Heart right ventricle (tissue), 16 donors: ENCODE measurements at regions of chr16 and their contacts with region 1.

Region 1: GRCh38 chr16:24036614-24037013 is 200.8 kb downstream of the PRKCB start:
- DNase-seq: peak in 1 of 2 donors; percentile 23
- ATAC-seq: peak in 5 of 8 donors; percentile 44 to 61 (median 58)
- H3K4me3 ChIP-seq: no peak overlapping the region
- H3K27ac ChIP-seq: no peak overlapping the region
- H3K4me1 ChIP-seq: peaks cover 0 to 16% (median 0%) of the 10 kb centered on the region in 9 donors
- H3K27me3 ChIP-seq: peaks cover 0 to 52% (median 17%) of the 10 kb centered on the region in 7 donors
- CTCF ChIP-seq: peak; percentile 24 to 75 (median 64)

Region 2: GRCh38 chr16:23682181-23682580 is 354.4 kb before region 1 on chr16:
- intact Hi-C with region 1: loop called in 1 of 10 experiments (anchors 5 kb)
- DNase-seq: no peak
- ATAC-seq: no peak
- H3K4me3 ChIP-seq: no peak overlapping the region
- H3K27ac ChIP-seq: no peak overlapping the region
- H3K4me1 ChIP-seq: peaks cover 3 to 33% (median 13%) of the 10 kb centered on the region in 9 donors
- H3K27me3 ChIP-seq: no peaks in the 10 kb centered on the region
- CTCF ChIP-seq: no peak

Region 3: DNA sequence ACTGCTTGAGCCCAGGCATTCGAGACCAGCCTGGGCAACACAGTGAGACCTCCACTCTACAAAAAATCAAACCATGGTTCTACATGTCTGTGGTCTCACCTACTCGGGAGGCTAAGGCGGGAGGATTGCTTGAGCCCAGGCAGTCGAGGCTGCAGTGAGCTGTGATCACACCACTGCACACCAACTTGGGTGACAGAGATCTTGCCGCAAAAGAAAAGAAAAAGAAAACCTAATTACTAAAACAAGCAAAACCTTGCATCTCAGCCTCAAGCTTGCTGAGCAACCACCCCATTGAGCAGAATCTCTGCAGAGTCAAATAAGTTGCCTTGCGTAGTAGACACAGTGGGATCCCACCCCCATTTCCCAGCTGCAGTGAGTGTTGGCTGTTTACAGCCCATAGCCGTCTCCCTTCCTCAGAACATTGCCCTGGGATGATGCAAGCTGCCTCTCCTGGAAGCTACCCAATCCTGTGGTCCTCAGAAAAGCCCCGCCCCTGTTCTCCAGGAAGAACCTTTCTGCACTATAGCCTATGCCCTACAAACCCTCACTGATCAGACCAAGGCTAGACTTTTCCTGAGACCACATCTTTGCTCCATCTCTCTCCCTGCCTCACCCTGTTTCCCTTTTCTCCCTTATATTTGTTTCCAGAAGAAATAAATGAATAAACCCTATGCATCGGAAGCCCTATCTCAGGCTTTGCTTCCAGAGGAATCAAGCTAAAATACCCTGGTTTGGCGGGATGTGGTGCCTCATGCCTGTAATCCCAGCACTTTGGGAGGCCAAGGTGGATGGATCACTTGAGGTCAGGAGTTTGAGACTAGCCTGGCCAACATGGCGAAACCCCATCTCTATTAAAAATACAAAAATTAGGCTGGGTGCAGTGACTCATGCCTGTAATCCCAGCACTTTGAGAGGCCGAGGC is 306.9 kb before region 1 on chr16:
- intact Hi-C with region 1: loop called in 7 of 10 experiments (anchors 2 to 10 kb)
- DNase-seq: no peak
- ATAC-seq: no peak
- H3K4me3 ChIP-seq: no peak overlapping the region
- H3K27ac ChIP-seq: no peak overlapping the region
- H3K4me1 ChIP-seq: peaks cover 0 to 3% (median 0%) of the 10 kb centered on the region in 9 donors
- H3K27me3 ChIP-seq: peaks cover 0 to 34% (median 8%) of the 10 kb centered on the region in 7 donors
- CTCF ChIP-seq: no peak

Region 4: GRCh38 chr16:23742766-23743165 is 293.8 kb before region 1 on chr16:
- intact Hi-C with region 1: loop called in 6 of 10 experiments (anchors 5 to 10 kb)
- DNase-seq: no peak
- ATAC-seq: no peak
- H3K4me3 ChIP-seq: no peak overlapping the region
- H3K27ac ChIP-seq: no peak overlapping the region
- H3K4me1 ChIP-seq: no peaks in the 10 kb centered on the region
- H3K27me3 ChIP-seq: peaks cover 0 to 49% (median 25%) of the 10 kb centered on the region in 7 donors
- CTCF ChIP-seq: no peak

Region 5: GRCh38 chr16:23803591-23804123 is 233.0 kb before region 1 on chr16:
- intact Hi-C with region 1: loop called in 2 of 10 experiments (anchors 2 kb)
- DNase-seq: peak; percentile 23 to 27
- ATAC-seq: peak in 3 of 8 donors; percentile 27 to 59 (median 38)
- H3K4me3 ChIP-seq: no peak overlapping the region
- H3K27ac ChIP-seq: no peak overlapping the region
- H3K4me1 ChIP-seq: peaks cover 0 to 7% (median 0%) of the 10 kb centered on the region in 9 donors
- H3K27me3 ChIP-seq: peaks cover 0 to 74% (median 21%) of the 10 kb centered on the region in 7 donors
- CTCF ChIP-seq: peak in 5 of 9 donors; percentile 16 to 76 (median 41)

Region 6: DNA sequence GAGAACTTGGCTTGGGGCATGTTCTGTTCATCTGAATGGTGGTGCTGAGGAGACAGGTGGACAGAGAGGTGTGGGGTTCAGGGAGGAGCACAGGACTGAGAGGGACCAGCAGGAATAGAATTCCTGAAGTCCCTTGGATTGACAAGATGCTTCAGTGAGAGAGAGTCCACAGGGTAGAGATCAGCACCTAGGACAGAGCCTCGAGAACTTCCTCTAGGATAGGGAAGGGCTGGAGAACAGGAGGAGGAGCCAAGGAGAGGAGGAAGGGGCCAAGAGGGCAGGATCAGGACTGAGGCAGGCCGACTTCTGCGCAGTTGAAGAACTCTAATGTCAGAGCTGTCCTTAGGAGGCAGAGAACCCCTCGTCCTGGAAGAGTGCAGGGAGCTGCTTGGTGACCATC is 62.4 kb before region 1 on chr16:
- intact Hi-C with region 1: loop called in 1 of 10 experiments (anchors 10 kb)
- DNase-seq: no peak
- ATAC-seq: no peak
- H3K4me3 ChIP-seq: no peak overlapping the region
- H3K27ac ChIP-seq: no peak overlapping the region
- H3K4me1 ChIP-seq: no peaks in the 10 kb centered on the region
- H3K27me3 ChIP-seq: peaks cover 0 to 7% (median 0%) of the 10 kb centered on the region in 7 donors
- CTCF ChIP-seq: no peak